Testis (tissue), 5 donors: ENCODE measurements at regions of chr7 and their contacts with region 1.

Region 1: GRCh38 chr7:134986363-134987251 is at the start of gene AGBL3:
- DNase-seq: peak; percentile 99
- H3K4me3 ChIP-seq: peak within 1 kb of the TSS; percentile 74 to 82
- H3K27ac ChIP-seq: peak within 1 kb of the TSS; percentile 89 to 92
- H3K4me1 ChIP-seq: no peaks in the 10 kb centered on the region
- H3K27me3 ChIP-seq: no peaks in the 10 kb centered on the region
- CTCF ChIP-seq: peak; percentile 65 to 66 (median 65)
- POLR2A ChIP-seq: no peak
- total RNA-seq, gene AGBL3: 10.0 to 21.6 TPM

Region 2: GRCh38 chr7:134831862-134832261 is 154.7 kb before region 1 on chr7:
- intact Hi-C with region 1: no loop called
- DNase-seq: peak; percentile 78
- H3K4me3 ChIP-seq: peak overlapping the region; percentile 7 to 36
- H3K27ac ChIP-seq: peak overlapping the region in 1 of 2 donors; percentile 18
- H3K4me1 ChIP-seq: peaks cover 8% of the 10 kb centered on the region
- H3K27me3 ChIP-seq: no peaks in the 10 kb centered on the region
- CTCF ChIP-seq: no peak
- POLR2A ChIP-seq: no peak

Region 3: GRCh38 chr7:135169141-135169960 is 182.7 kb after region 1 on chr7:
- intact Hi-C with region 1: loop called (anchors 10 kb)
- DNase-seq: no peak
- H3K4me3 ChIP-seq: peak overlapping the region; percentile 73 to 79
- H3K27ac ChIP-seq: peak overlapping the region; percentile 84 to 93
- H3K4me1 ChIP-seq: peaks cover 16% of the 10 kb centered on the region
- H3K27me3 ChIP-seq: no peaks in the 10 kb centered on the region
- CTCF ChIP-seq: no peak
- POLR2A ChIP-seq: no peak

Region 4: GRCh38 chr7:135224027-135224426 is 237.4 kb after region 1 on chr7:
- intact Hi-C with region 1: no loop called
- DNase-seq: no peak
- H3K4me3 ChIP-seq: no peak overlapping the region
- H3K27ac ChIP-seq: no peak overlapping the region
- H3K4me1 ChIP-seq: no peaks in the 10 kb centered on the region
- H3K27me3 ChIP-seq: no peaks in the 10 kb centered on the region
- CTCF ChIP-seq: no peak
- POLR2A ChIP-seq: no peak